ENCODE measurements at regions of chr3 and their contacts with region 1.

Region 1: GRCh38 chr3:62665598-62666437 is 209.4 kb downstream of the CADPS start:
- DNase-seq: peak; percentile 56 to 96
- H3K4me3 ChIP-seq: no peak overlapping the region
- H3K27ac ChIP-seq: no peak overlapping the region
- H3K4me1 ChIP-seq: peaks cover 0 to 5% (median 2%) of the 10 kb centered on the region in 4 experiments; a peak in 4 of 7 replicates
- H3K27me3 ChIP-seq: no peaks in the 10 kb centered on the region
- CTCF ChIP-seq: peak; percentile 83 to 96 (median 95)
- EP300 ChIP-seq: no peak
- POLR2A ChIP-seq: no peak
- RAD21 ChIP-seq: peak; percentile 99

Region 2: GRCh38 chr3:62538706-62539356 is 127.0 kb before region 1 on chr3:
- CTCF ChIA-PET with region 1: no interaction called
- POLR2A ChIA-PET with region 1: no interaction called
- DNase-seq: no peak
- H3K4me3 ChIP-seq: peak overlapping the region in 1 of 4 experiments; percentile 33; a peak in 1 of 8 replicates
- H3K27ac ChIP-seq: no peak overlapping the region
- H3K4me1 ChIP-seq: peaks cover 6 to 15% (median 12%) of the 10 kb centered on the region in 4 experiments; a peak in 6 of 7 replicates
- H3K27me3 ChIP-seq: no peaks in the 10 kb centered on the region
- CTCF ChIP-seq: no peak
- EP300 ChIP-seq: no peak
- POLR2A ChIP-seq: no peak
- RAD21 ChIP-seq: no peak

Region 3: GRCh38 chr3:62558549-62559112 is 107.2 kb before region 1 on chr3:
- CTCF ChIA-PET with region 1: no interaction called
- POLR2A ChIA-PET with region 1: no interaction called
- DNase-seq: peak; percentile 36 to 72
- H3K4me3 ChIP-seq: no peak overlapping the region
- H3K27ac ChIP-seq: no peak overlapping the region
- H3K4me1 ChIP-seq: peaks cover 0 to 10% (median 5%) of the 10 kb centered on the region in 4 experiments; a peak in 2 of 7 replicates
- H3K27me3 ChIP-seq: no peaks in the 10 kb centered on the region
- CTCF ChIP-seq: peak; percentile 46 to 87 (median 73)
- EP300 ChIP-seq: no peak
- POLR2A ChIP-seq: no peak
- RAD21 ChIP-seq: peak; percentile 90 to 91

Region 4: GRCh38 chr3:62678841-62679240 is 13.0 kb after region 1 on chr3:
- CTCF ChIA-PET with region 1: interaction called, 46 read pairs
- POLR2A ChIA-PET with region 1: interaction called, 3 read pairs
- DNase-seq: no peak
- H3K4me3 ChIP-seq: peak overlapping the region in 1 of 4 experiments; percentile 34; a peak in 1 of 8 replicates
- H3K27ac ChIP-seq: no peak overlapping the region
- H3K4me1 ChIP-seq: peaks cover 10 to 20% (median 13%) of the 10 kb centered on the region in 4 experiments; a peak in 6 of 7 replicates
- H3K27me3 ChIP-seq: peaks cover 0 to 1% (median 0%) of the 10 kb centered on the region in 4 experiments; a peak in 1 of 7 replicates
- CTCF ChIP-seq: no peak
- EP300 ChIP-seq: peak in 1 of 2 experiments; percentile 59; a peak in 1 of 3 replicates
- POLR2A ChIP-seq: no peak
- RAD21 ChIP-seq: no peak

Region 5: GRCh38 chr3:62718515-62719320 is 52.9 kb after region 1 on chr3:
- CTCF ChIA-PET with region 1: interaction called, 23 read pairs
- POLR2A ChIA-PET with region 1: no interaction called
- DNase-seq: no peak
- H3K4me3 ChIP-seq: no peak overlapping the region
- H3K27ac ChIP-seq: no peak overlapping the region
- H3K4me1 ChIP-seq: peaks cover 0 to 6% (median 2%) of the 10 kb centered on the region in 4 experiments; a peak in 5 of 7 replicates
- H3K27me3 ChIP-seq: no peaks in the 10 kb centered on the region
- CTCF ChIP-seq: no peak
- EP300 ChIP-seq: no peak
- POLR2A ChIP-seq: no peak
- RAD21 ChIP-seq: no peak

Region 6: DNA sequence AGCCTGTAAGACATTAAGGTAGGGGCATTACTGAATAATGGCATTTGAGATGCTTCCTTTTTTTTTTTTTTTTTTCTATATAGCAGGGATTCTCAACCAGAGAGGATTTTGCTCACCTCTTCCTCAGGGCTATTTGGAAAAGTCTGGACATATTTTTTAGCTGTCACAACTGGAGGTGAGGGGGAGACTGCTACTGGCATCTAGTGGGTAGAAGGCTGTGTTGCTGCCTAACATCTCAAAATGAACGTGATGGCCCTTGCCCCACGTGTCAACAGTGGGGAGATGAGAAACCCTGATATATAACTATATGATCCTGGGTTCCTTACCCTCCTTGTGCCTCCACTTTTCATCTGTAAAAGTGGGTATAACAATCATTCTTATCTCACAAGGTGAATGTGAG is 137.5 kb after region 1 on chr3:
- CTCF ChIA-PET with region 1: interaction called, 216 read pairs
- POLR2A ChIA-PET with region 1: no interaction called
- DNase-seq: no peak
- H3K4me3 ChIP-seq: no peak overlapping the region
- H3K27ac ChIP-seq: no peak overlapping the region
- H3K4me1 ChIP-seq: peaks cover 0 to 7% (median 2%) of the 10 kb centered on the region in 4 experiments; a peak in 6 of 7 replicates
- H3K27me3 ChIP-seq: no peaks in the 10 kb centered on the region
- CTCF ChIP-seq: peak in 2 of 3 experiments; percentile 18 to 37; a peak in 3 of 4 replicates
- EP300 ChIP-seq: no peak
- POLR2A ChIP-seq: no peak
- RAD21 ChIP-seq: peak; percentile 54 to 66

Region 7: DNA sequence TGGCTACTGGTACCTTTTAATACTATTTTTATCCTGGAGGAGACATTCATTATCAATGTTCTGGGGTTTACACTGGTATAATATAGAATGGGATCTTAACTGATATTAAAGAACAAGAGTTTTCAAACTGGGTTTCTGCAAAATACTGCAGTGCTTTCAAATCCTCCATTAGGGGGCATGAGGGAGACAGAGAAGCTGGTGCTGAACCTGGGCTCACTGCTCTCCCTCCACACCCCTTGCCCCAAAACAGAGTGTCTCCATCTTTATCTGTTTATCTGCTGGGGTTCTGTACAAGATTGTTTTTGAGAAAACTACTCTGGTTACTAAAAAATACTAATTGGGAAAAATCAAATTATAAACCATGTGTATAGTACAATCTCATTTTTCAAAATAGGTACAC is 167.7 kb after region 1 on chr3:
- CTCF ChIA-PET with region 1: interaction called, 76 read pairs
- POLR2A ChIA-PET with region 1: no interaction called
- DNase-seq: no peak
- H3K4me3 ChIP-seq: no peak overlapping the region
- H3K27ac ChIP-seq: no peak overlapping the region
- H3K4me1 ChIP-seq: no peaks in the 10 kb centered on the region
- H3K27me3 ChIP-seq: no peaks in the 10 kb centered on the region
- CTCF ChIP-seq: peak; percentile 63 to 70 (median 70)
- EP300 ChIP-seq: no peak
- POLR2A ChIP-seq: no peak
- RAD21 ChIP-seq: peak; percentile 71 to 80

Region 8: DNA sequence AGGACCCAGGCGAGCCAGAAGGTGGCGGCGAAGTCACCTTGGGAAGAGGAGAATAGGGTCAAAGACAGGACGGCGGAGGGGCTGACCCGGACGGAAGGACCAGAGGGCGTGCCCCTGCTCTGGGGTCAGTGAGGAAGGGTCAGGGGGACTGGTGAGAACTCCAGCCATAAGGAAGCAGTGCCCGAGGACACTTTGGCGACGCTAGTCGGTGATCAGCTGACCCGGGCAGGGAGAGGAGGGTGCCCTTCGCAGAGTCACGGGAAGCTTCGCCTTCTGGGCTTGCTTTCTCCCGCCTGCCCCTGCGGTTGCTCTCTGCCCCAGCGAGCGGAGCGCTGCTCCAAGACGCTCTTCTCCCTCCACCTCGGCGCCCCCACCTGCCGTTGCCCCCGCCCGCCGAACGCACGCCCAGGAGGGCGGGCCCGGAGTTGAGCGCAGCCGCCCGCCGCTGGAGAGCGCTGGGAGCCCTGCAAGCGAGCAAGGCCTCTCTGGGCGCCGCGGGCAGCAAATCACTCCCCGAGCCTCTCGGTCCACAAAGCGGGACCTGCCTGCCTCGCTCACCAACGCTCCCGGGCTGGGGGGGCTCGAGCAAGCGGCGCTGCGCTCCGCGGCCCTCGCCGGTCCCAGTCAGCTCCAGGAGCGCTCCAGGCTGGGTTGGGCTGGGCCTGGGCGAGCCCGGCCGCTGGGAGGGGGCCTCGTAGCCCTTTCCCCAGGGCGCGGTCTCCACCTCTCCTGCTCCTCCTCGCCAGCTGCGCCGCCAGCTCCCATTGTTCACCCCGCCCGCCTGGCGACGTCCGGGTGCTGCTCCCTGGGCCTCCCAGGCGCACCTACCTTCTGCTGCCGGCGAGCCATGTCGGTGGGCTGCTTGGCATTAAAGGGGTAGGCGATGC is 208.2 kb after region 1 on chr3:
- CTCF ChIA-PET with region 1: interaction called, 44 read pairs
- POLR2A ChIA-PET with region 1: interaction called, 3 read pairs
- DNase-seq: peak; percentile 70 to 90
- H3K4me3 ChIP-seq: peak overlapping the region; percentile 67 to 82 (median 74)
- H3K27ac ChIP-seq: peak overlapping the region; percentile 35; the same call in 1 of the 2 replicates
- H3K4me1 ChIP-seq: peaks cover 0 to 1% (median 0%) of the 10 kb centered on the region in 4 experiments; a peak in 3 of 7 replicates
- H3K27me3 ChIP-seq: no peaks in the 10 kb centered on the region
- CTCF ChIP-seq: peak; percentile 71 to 76 (median 76)
- EP300 ChIP-seq: no peak
- POLR2A ChIP-seq: peak in 1 of 2 experiments; percentile 54; a peak in 1 of 3 replicates
- RAD21 ChIP-seq: peak; percentile 78 to 85

Region 9: DNA sequence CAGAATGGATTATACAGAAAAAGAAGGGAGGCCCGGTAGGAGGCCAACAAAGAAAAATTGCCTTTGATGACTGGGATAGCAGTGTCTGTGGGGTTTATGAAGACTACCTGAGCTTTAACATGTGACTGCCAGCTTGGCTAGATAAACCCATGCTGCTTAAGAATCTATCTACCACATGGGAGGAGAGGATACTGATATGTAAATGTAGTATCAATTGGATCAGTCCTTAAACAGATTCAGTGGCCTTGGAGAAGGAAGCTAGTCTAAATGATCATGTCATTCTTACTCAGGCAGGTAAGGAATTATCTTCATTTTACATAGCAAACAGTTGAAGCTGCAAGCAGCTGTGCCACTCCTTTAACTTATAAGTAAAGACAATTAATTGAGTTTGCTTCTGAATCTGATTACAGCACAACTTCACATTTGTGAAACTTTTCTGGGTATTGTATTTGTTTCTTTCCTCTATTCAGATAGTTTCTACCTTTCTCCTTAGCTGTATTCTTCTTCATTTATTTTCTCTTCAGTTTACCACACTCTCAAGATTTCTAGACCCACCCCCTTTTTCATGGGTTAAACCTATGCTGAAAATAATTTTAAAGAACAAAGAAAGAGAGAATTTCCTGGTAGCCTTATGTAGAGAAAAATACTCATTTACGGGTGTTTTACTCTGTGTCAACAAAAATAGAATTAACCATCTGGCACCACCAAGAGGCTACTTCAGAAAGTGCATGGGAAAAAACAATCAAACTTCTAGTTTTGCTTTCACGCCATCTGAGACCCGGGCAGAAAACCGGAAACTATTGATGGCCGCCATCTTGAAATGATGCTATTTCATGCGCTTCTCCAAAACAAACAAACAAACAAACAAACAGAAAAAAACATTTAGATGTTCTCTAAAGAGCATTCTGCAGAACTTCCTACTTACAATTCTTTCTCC is 562.5 kb after region 1 on chr3:
- CTCF ChIA-PET with region 1: interaction called, 48 read pairs
- POLR2A ChIA-PET with region 1: no interaction called
- DNase-seq: no peak
- H3K4me3 ChIP-seq: no peak overlapping the region
- H3K27ac ChIP-seq: no peak overlapping the region
- H3K4me1 ChIP-seq: peaks cover 0 to 7% (median 5%) of the 10 kb centered on the region in 4 experiments; a peak in 5 of 7 replicates
- H3K27me3 ChIP-seq: no peaks in the 10 kb centered on the region
- CTCF ChIP-seq: peak in 2 of 3 experiments; percentile 55 to 64; a peak in 2 of 4 replicates
- EP300 ChIP-seq: no peak
- POLR2A ChIP-seq: no peak
- RAD21 ChIP-seq: peak; percentile 72 to 81

Measured in H1 (cell line).